Head of caudate nucleus (tissue), 42 donors: ENCODE measurements at regions of chr14 and their contacts with region 1.

Region 1: DNA sequence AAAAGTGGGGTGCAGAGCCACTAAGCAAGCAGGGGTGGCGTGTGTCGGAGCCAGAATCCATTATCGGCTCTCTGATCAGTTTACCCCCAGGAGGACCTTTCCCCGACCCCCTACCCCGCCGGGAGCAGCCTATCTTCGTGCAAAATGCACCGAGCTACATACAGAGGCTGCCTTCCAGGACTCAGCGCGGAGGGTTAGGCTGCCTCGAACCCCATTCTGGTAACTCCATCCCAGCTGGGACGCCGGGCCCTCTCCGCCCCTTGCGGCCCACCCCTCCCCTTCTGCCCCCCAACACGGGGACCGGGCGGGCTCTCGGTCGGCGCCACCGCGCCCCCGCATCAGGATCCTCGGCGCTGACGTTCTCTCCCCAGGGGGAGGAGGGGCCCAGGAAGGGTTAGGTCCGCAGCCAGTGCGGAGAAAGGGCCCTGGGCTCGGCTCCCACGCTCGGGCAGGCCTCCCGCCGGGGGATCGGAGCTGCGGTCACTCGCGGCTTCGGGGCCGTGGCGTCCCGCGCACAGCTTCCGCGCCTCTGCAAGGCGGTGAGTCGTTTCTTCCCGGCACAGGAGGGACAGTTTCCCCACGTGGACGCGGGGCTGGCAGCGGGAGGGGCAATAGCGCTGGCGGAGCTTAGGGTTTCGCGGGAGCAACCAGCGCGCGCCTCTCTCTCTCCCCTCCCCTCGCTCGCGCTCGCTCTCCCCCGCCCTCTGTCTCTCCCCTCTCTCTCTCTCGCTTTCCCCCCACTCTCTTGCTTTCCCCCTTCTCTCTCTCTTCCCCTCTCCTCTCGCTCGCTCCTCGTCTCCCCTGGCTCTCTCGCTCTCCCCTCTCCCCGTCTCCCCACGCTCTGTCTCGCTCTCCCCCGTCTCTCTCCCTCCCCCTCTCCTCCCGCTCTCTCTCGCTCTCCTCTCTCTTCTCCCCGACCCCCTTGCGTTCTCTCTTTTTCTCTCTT is 12.5 kb upstream of the MAP3K9 start:
- DNase-seq: peak in 40 of 42 donors; percentile 37 to 89 (median 68)

Region 2: GRCh38 chr14:70873627-70874026 is 51.8 kb after region 1 on chr14:
- intact Hi-C with region 1: no loop called
- DNase-seq: no peak

Region 3: GRCh38 chr14:70907176-70907995 is 85.5 kb after region 1 on chr14 and contains the start of gene PCNX1:
- intact Hi-C with region 1: loop called (anchors 5 kb)
- DNase-seq: peak; percentile 61 to 95 (median 90)

Region 4: GRCh38 chr14:70972107-70972976 is 150.5 kb after region 1 on chr14:
- intact Hi-C with region 1: loop called (anchors 5 kb)
- DNase-seq: peak; percentile 47 to 97 (median 90)